ENCODE measurements at regions of chr22 and their contacts with region 1.

Region 1: DNA sequence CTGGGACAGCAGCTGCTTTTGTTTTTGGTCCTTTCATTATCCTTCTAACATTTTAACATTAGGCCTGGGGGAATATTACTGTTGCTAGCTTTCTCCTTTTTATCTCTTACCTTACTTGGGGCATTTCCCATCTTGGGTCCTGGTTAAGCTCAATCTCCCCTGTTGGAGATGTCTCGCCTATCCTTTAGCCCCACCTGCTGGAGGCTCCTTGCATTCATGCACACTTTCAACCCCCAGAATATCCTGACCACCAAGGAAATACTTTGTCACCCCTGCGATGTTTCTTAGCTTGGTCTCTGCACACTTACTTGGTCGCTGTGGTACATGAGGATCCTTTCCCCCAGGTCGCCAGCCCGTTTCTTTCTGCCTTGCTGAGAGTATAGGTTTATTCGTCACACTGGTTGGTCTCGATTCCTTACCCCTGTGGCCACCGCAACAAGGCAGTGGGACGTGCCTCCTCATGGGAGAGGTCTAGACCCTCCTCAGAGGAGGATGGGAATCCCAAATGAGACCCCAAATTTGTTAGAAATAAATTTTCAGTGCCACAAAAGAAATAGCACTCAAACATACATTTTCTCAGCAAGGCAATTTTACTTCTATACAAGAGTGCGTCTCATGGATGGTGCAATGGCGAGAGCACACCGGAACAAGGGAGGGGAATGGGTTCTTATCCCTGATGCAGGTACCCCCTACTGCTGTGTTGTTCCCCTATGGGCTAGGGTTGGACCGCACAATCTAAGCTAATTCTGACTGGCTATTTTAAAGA is 5.4 kb upstream of the TXN2 start:
- DNase-seq: peak; percentile 50 to 83 (median 59)
- ATAC-seq: no peak
- H3K4me3 ChIP-seq: no peak overlapping the region
- H3K4me3 Mint-ChIP-seq: peak overlapping the region; percentile 52
- H3K27ac ChIP-seq: no peak overlapping the region
- H3K27ac Mint-ChIP-seq: no peak overlapping the region
- H3K4me1 ChIP-seq: peaks cover 8% of the 10 kb centered on the region
- H3K4me1 Mint-ChIP-seq: peaks cover 5% of the 10 kb centered on the region
- H3K27me3 ChIP-seq: no peaks in the 10 kb centered on the region
- H3K27me3 Mint-ChIP-seq: no peaks in the 10 kb centered on the region
- CTCF ChIP-seq: peak; percentile 57

Region 2: DNA sequence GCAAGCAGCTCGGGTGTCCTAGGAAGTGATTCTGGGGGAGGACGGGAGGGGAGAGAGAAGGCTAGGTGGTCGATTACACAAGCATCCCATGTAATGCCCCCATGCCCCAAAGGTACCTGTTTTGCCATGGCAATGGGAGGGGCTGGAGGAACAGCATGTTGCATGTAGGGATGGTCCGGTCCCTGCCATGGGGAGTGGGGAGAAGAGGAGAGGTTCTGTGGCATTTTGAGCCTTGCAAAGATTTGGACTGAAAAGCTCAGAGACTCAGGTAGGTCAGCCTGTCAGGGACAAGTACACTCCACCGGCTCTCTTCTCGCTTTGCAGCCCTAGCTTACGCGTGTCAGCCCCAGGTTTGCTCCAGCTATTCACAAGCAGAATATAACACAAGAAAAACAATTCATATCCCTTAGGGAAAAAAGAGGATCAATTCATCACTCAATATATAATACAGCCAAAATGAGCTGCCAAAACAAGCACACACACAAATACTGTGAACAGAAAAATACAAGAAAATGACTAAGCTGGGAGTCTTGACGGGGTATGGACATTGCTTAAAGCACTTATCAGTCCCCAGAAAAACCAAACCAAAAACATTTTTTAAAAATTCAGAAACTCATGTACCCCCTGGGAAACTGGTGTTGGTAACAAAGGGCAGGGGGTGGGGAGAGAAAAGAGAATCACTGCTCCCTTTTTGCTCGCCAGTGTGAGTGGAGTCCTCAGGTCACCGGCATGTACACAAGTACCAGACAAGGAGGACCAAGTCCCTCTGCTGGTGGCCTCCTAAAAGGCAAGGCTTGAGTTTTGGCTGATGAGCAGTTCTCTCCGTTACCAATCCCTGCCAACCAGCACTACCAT is 747.5 kb before region 1 on chr22:
- CTCF ChIA-PET with region 1: no interaction called
- POLR2A ChIA-PET with region 1: no interaction called
- intact Hi-C with region 1: no loop called
- DNase-seq: peak in 6 of 14 experiments; percentile 1 to 40 (median 15)
- ATAC-seq: no peak
- H3K4me3 ChIP-seq: no peak overlapping the region
- H3K4me3 Mint-ChIP-seq: no peak overlapping the region
- H3K27ac ChIP-seq: no peak overlapping the region
- H3K27ac Mint-ChIP-seq: no peak overlapping the region
- H3K4me1 ChIP-seq: no peaks in the 10 kb centered on the region
- H3K4me1 Mint-ChIP-seq: no peaks in the 10 kb centered on the region
- H3K27me3 ChIP-seq: no peaks in the 10 kb centered on the region
- H3K27me3 Mint-ChIP-seq: no peaks in the 10 kb centered on the region
- CTCF ChIP-seq: peak; percentile 9

Region 3: GRCh38 chr22:35987487-35987886 is 499.3 kb before region 1 on chr22:
- CTCF ChIA-PET with region 1: no interaction called
- POLR2A ChIA-PET with region 1: no interaction called
- intact Hi-C with region 1: no loop called
- DNase-seq: no peak
- ATAC-seq: no peak
- H3K4me3 ChIP-seq: no peak overlapping the region
- H3K4me3 Mint-ChIP-seq: no peak overlapping the region
- H3K27ac ChIP-seq: no peak overlapping the region
- H3K27ac Mint-ChIP-seq: no peak overlapping the region
- H3K4me1 ChIP-seq: no peaks in the 10 kb centered on the region
- H3K4me1 Mint-ChIP-seq: no peaks in the 10 kb centered on the region
- H3K27me3 ChIP-seq: peaks cover 0 to 4% of the 10 kb centered on the region in 2 experiments
- H3K27me3 Mint-ChIP-seq: peaks cover 12% of the 10 kb centered on the region
- CTCF ChIP-seq: no peak

Region 4: DNA sequence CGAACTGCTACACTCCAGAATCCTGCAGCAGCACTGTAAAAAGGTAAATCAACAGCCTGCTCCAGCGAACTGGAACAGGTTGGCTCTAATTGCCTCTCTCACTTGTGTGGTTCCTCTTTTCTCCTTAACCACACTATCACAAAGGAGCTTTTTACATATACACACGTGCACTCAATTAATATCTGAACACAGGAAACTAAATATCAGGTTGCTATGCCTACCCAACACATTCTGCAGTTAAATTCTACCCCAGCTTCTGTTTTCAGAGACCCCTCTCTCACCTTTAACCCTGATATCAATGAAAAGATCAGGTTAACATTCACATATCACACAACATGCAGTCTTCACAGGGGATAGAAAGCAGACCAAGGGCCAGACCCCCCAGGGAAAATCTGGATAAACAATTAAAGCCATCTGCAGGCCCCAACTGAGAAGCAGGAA is 469.1 kb before region 1 on chr22:
- CTCF ChIA-PET with region 1: no interaction called
- POLR2A ChIA-PET with region 1: no interaction called
- intact Hi-C with region 1: no loop called
- DNase-seq: no peak
- ATAC-seq: no peak
- H3K4me3 ChIP-seq: no peak overlapping the region
- H3K4me3 Mint-ChIP-seq: no peak overlapping the region
- H3K27ac ChIP-seq: no peak overlapping the region
- H3K27ac Mint-ChIP-seq: no peak overlapping the region
- H3K4me1 ChIP-seq: no peaks in the 10 kb centered on the region
- H3K4me1 Mint-ChIP-seq: peaks cover 12% of the 10 kb centered on the region
- H3K27me3 ChIP-seq: no peaks in the 10 kb centered on the region
- H3K27me3 Mint-ChIP-seq: peaks cover 8% of the 10 kb centered on the region
- CTCF ChIP-seq: no peak

Region 5: GRCh38 chr22:36194971-36195370 is 291.8 kb before region 1 on chr22:
- CTCF ChIA-PET with region 1: interaction called, 8 read pairs
- POLR2A ChIA-PET with region 1: no interaction called
- intact Hi-C with region 1: loop called (anchors 1 to 2 kb)
- DNase-seq: peak in 13 of 14 experiments; percentile 6 to 64 (median 23)
- ATAC-seq: peak; percentile 39
- H3K4me3 ChIP-seq: no peak overlapping the region
- H3K4me3 Mint-ChIP-seq: no peak overlapping the region
- H3K27ac ChIP-seq: no peak overlapping the region
- H3K27ac Mint-ChIP-seq: no peak overlapping the region
- H3K4me1 ChIP-seq: peaks cover 9% of the 10 kb centered on the region
- H3K4me1 Mint-ChIP-seq: peaks cover 6% of the 10 kb centered on the region
- H3K27me3 ChIP-seq: no peaks in the 10 kb centered on the region
- H3K27me3 Mint-ChIP-seq: peaks cover 18% of the 10 kb centered on the region
- CTCF ChIP-seq: peak; percentile 53

Region 6: DNA sequence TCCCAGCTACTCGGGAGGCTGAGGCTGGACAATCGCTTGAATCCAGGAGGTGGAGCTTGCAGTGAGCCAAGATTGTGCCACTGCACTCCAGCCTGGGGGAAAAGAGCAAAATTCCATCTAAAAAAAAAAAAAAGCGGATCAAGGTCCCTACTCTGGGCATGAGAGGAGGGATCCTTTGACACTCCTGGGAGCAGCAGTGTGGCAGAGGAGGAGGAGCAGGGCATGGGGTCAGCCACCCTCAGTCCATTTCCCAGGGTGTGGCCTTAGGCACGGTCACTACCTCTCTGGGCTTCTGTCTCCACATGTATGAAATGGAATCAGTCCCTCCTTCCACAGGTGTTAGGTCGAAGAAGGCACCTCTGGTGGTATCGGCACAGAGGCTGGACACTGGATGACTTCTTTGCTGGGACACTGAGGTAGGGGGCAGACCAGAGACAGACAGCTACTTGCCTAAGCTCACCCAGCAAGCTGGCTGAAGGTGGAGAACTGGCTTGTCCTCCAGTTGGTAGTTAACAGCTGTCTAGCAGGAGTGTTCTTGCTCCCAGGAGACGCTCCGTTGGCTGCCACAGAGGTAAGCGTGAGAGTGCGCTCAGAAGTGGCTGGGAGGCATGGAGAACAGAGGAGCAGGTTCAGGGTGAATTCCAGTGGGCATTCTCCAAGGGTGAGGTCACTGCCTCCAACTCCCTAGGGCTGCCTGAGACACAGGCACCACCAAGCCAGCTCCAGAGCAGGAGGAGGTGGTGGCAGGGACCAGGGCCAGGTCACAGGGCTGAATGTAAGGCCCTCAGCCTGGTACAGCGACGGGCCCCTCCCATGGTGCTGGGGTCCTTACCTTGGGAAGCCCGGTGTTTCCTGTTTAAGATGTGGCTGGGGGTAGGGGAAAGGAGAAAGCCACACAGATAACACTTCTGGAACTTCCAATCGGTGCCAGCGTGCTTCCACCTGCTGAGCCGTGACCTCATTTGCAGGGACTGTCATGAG is 24.8 kb before region 1 on chr22:
- CTCF ChIA-PET with region 1: no interaction called
- POLR2A ChIA-PET with region 1: no interaction called
- intact Hi-C with region 1: no loop called
- DNase-seq: peak in 1 of 14 experiments; percentile 12
- ATAC-seq: no peak
- H3K4me3 ChIP-seq: no peak overlapping the region
- H3K4me3 Mint-ChIP-seq: no peak overlapping the region
- H3K27ac ChIP-seq: no peak overlapping the region
- H3K27ac Mint-ChIP-seq: no peak overlapping the region
- H3K4me1 ChIP-seq: peaks cover 6% of the 10 kb centered on the region
- H3K4me1 Mint-ChIP-seq: peaks cover 12% of the 10 kb centered on the region
- H3K27me3 ChIP-seq: no peaks in the 10 kb centered on the region
- H3K27me3 Mint-ChIP-seq: no peaks in the 10 kb centered on the region
- CTCF ChIP-seq: no peak